GM23248 (cell line): ENCODE measurements at regions of chr14 and their contacts with region 1.

Region 1: DNA sequence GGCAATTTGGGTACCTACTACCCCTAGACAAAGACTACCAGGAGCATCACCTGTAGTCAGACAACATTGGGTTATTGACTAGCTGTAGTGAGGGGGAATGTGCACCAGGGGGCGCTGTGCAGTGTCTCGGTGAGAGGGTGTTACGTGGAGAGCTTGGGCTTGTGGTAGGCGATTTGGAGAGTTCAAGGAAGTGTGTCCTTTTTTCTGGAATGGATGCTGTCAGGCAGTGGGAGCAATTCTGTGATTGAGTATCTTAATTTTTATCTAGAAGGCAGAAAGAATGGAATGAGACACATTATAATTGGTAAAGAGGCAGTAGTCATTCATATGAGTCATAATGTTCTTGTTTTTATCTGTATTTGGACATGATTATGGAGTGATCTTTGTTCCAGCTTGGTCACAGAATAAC is 187.7 kb downstream of the GALC start:
- DNase-seq: peak; percentile 48
- H3K4me3 ChIP-seq: no peak overlapping the region
- H3K27ac ChIP-seq: no peak overlapping the region
- H3K4me1 ChIP-seq: 0 out of 2 replicates have a peak, but pooled peaks cover 7% of the 10 kb centered on the region
- H3K27me3 ChIP-seq: no peaks in the 10 kb centered on the region

Region 2: GRCh38 chr14:87896393-87897380 is 91.4 kb after region 1 on chr14:
- in situ Hi-C with region 1: loop called (anchors 10 kb)
- DNase-seq: peak; percentile 75
- H3K4me3 ChIP-seq: no peak overlapping the region
- H3K27ac ChIP-seq: no peak overlapping the region
- H3K4me1 ChIP-seq: no peaks in the 10 kb centered on the region
- H3K27me3 ChIP-seq: no peaks in the 10 kb centered on the region

Region 3: DNA sequence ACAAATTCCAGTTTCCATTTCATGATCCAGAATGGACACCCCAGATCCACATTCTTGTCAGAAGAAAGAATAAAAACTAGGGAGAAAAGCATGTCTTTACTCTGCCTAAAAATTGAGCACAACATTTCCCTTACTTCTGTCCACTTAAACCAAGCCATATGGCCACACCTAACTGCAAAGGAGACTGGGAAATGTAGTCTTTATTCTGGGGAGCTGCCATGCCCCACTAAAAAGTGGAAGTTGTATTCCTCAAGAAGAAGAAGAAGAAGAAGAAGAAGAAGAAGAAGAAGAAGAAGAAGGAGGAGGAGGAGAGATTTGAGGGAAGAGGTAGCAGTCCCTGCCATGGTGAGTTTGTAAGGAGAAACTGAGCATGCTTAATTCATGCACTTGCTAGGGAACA is 284.1 kb after region 1 on chr14:
- in situ Hi-C with region 1: no loop called
- DNase-seq: no peak
- H3K4me3 ChIP-seq: no peak overlapping the region
- H3K27ac ChIP-seq: no peak overlapping the region
- H3K4me1 ChIP-seq: no peaks in the 10 kb centered on the region
- H3K27me3 ChIP-seq: no peaks in the 10 kb centered on the region